ENCODE measurements at regions of chr3 and their contacts with region 1.

Region 1: DNA sequence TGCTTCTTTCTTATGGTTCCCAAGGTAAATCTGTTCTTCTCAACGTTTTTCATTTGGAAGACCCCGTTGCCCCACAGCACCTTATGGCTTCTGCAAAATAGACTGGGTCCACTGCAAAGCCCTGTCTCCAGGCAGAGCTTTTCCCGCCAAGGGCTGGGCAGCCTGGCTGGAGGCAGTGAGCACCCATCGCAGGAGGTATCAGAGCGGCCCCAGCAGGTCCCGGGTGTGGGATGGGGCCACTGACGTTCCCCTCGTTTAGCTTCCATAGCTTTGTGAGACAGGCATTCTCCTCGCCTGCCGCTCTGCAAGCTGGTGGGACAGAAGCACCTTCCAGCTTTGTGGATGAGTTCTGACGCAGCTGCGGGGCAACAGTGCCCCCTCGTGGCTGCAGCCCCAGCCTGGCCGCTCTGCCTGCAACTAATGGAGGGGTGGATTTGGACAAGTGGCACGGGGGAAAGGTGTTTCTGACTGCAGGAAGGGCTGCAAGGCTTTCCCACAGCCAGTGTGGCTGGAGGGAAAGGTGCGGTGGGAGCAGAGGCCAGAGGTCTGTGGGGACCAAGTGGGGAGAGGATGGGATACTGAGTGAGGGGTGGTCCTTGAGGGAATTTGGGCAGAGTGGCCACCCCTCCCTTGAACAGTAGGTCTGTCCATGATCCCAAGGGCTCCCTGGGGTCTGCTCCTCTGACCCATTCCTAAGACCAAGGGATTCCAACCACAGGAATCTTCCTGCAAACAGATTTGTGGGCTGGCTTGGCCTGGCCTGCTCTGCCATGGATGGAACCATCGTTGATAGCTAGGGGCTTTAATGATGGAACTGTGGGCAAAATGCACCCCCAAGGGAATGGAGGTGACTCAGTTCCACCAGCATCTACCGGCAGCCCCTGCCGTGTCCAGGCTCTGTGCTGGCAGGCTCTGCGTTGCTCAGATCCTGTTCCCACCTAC is 99.4 kb downstream of the FBLN2 start:
- DNase-seq: peak; percentile 92
- CTCF ChIP-seq: peak; percentile 98

Region 2: DNA sequence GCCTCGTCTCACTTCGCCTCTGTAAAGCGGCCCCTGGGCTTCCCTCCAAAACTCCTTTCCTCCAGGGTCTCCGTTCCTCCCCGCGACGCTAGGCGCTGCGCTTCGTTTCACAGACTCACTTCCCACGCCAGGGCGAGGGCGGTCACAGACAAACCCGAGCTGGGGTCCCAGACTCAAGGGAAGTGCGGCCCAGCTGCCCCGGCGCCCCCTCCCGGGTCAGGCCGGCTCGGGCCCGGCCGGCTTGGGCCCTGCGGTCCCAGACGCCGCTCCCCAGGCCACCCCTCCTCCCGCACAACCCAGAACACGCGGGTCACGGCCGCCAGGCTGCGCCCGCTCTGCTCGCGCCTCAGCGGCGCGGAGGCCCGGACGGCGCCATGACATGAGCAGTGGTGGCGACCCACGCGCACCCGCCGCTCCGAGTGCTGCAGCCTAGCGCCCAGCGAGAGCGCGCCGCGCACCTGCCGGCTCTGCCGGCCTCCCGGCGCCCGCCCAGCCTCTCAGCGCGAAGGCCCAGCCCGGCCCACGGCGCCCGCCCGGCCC is 228.8 kb before region 1 on chr3:
- in situ Hi-C with region 1: no loop called
- DNase-seq: peak; percentile 76
- CTCF ChIP-seq: peak; percentile 1

Region 3: GRCh38 chr3:13495921-13496723 is 152.2 kb before region 1 on chr3:
- in situ Hi-C with region 1: loop called (anchors 5 kb)
- DNase-seq: peak; percentile 71
- CTCF ChIP-seq: peak; percentile 92